AG04450 (cell line): ENCODE measurements at regions of chr1 and their contacts with region 1.

Region 1: GRCh38 chr1:30929135-30929889 is 20.8 kb upstream of the SDC3 start:
- DNase-seq: no peak
- H3K4me3 ChIP-seq: no peak overlapping the region
- H3K27ac ChIP-seq: no peak overlapping the region
- H3K27me3 ChIP-seq: no peaks in the 10 kb centered on the region
- CTCF ChIP-seq: peak; percentile 77

Region 2: GRCh38 chr1:30718636-30719405 is 210.5 kb before region 1 on chr1:
- CTCF ChIA-PET with region 1: interaction called, 13 read pairs
- POLR2A ChIA-PET with region 1: no interaction called
- DNase-seq: peak; percentile 95
- H3K4me3 ChIP-seq: peak overlapping the region; percentile 66
- H3K27ac ChIP-seq: peak overlapping the region; percentile 99
- H3K27me3 ChIP-seq: no peaks in the 10 kb centered on the region
- CTCF ChIP-seq: peak; percentile 84

Region 3: DNA sequence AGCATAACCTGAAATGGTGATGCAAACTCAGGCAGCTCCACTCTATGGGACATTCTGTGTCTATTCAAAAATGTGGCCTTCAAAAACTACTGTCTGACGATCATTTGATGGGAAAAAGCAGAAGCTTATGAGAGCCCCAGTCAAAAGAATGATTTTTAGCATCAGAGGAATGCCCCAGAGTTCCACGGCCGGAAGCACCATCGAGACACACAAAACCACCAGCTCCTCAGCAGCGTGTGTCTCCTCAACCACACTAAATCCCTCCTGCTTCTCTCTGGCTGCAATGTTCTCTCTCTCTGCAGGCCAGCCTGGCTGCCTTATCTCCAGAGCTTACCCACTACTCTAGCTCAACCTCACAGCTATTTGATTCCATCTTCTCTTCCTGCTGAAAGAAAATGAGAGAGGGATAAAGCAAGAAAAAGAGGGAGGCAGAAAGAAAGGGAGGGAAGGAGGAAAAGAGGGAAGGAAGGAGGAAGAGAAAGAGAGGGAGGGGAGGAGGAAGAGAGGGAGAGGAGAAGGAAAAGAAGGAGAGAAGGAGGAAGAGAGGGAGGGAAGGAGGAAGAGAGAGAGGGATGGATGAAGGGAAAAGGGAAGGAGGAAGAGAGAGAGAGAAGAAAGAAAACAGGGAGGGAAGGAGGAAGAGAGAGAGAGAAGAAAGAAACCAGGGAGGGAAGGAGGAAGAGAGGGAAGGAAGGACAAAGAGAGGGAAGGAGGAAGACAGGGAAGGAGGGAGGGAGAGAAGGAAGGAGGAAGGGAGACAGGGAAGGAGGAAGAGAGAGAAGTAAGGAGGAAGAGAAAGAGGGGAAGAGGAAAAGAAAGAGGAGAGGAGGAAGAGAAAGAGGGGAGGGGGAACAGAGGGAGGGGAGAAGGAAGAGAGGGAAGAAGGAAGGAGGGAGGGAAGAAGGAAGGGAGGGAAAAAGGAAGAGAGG is 138.2 kb before region 1 on chr1:
- CTCF ChIA-PET with region 1: interaction called, 10 read pairs
- POLR2A ChIA-PET with region 1: no interaction called
- DNase-seq: no peak
- H3K4me3 ChIP-seq: no peak overlapping the region
- H3K27ac ChIP-seq: no peak overlapping the region
- H3K27me3 ChIP-seq: peaks cover 9% of the 10 kb centered on the region
- CTCF ChIP-seq: no peak

Region 4: DNA sequence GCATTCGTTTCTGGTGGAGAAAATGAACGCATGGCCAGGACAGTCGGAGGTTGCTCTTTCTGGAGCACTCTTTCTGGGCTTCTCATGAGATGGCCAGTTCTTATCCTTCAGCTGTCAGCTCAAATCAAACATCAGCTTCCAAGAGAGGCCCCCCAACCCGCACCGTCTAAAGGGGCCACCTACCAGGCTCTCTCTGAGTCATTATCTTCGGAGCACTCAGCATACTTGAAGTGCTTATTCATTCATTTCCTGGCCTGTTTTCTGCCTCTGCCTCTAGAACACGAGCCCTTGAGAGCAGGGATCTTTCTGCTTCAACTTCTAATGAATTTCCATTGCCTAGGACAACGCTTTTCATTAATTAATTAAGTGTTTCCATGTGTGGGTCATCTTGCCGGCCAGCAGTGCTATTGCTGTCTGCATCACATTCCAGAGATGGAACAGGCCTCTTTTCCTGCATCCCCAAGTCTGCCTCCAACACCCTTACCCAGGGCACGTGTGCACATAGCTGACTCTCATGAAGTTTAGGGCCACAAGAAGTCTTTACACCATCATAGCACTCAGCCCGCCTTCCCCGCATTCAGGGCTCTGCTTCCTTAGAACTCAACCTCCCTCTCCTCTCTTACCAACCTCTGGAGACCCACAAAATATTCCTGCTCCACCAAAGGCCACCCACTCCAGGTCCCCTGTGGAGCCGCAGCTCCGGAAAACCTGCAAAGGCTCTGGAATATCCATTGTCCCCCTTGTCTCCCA is 119.6 kb before region 1 on chr1:
- CTCF ChIA-PET with region 1: interaction called, 12 read pairs
- POLR2A ChIA-PET with region 1: no interaction called
- DNase-seq: peak; percentile 71
- H3K4me3 ChIP-seq: no peak overlapping the region
- H3K27ac ChIP-seq: peak overlapping the region; percentile 94
- H3K27me3 ChIP-seq: no peaks in the 10 kb centered on the region
- CTCF ChIP-seq: no peak

Region 5: DNA sequence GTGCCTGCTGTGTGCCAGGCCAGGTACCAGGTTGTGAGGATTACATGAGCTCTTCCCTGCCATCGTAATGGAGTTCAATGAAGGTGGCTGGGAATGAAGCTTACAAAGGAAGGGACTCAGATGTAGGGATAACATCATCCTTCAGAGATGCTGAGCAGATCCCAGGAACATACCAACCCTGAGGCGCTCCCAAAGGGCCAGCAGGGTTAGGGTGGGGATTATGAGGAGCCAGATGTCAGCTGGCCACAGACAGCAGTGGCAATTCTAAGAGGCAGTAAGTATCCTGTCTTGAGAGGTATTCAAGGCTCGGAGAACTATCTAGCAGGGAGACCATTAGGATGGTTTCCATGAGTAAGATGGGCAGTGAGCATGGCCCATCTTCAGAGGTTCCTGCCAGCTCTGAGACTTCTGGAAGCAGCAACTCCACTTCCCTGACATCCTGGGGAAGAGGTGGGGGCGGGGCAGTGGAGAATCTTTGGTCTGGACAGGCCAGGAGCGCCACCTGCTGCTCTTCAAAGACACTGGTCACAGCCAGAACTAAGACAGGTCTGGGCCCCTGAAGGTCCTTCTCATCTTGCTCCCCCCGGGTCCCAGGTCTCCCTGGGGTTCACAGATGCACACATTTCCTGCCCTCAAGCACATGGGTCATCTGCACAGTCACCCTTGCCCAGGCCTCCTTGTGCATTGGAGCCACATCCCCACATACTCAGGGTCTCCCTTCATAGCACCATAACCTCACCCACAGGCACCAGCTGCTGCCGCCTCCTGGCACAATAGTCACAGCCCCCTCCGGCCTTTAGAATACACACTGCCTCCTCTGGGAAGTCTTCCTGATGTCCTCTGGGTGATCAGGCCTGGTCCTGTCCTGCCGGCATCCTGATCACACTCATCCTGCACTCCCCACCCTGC is 18.0 kb before region 1 on chr1:
- CTCF ChIA-PET with region 1: interaction called, 17 read pairs
- POLR2A ChIA-PET with region 1: interaction called, 9 read pairs
- DNase-seq: peak; percentile 68
- H3K4me3 ChIP-seq: no peak overlapping the region
- H3K27ac ChIP-seq: no peak overlapping the region
- H3K27me3 ChIP-seq: no peaks in the 10 kb centered on the region
- CTCF ChIP-seq: peak; percentile 87

Region 6: GRCh38 chr1:30919025-30919881 is 10.1 kb before region 1 on chr1:
- CTCF ChIA-PET with region 1: interaction called, 14 read pairs
- POLR2A ChIA-PET with region 1: interaction called, 4 read pairs
- DNase-seq: peak; percentile 55
- H3K4me3 ChIP-seq: no peak overlapping the region
- H3K27ac ChIP-seq: no peak overlapping the region
- H3K27me3 ChIP-seq: no peaks in the 10 kb centered on the region
- CTCF ChIP-seq: peak; percentile 31; the same call in 1 of the 2 replicates

Region 7: GRCh38 chr1:31000301-31000700 is 71.0 kb after region 1 on chr1:
- CTCF ChIA-PET with region 1: no interaction called
- POLR2A ChIA-PET with region 1: no interaction called
- DNase-seq: no peak
- H3K4me3 ChIP-seq: no peak overlapping the region
- H3K27ac ChIP-seq: no peak overlapping the region
- H3K27me3 ChIP-seq: no peaks in the 10 kb centered on the region
- CTCF ChIP-seq: no peak